Activated B cell treated with CpG ODN at 0.5 μM for 24 hours (primary cell): ENCODE measurements at regions of chr6 and their contacts with region 1.

Region 1: DNA sequence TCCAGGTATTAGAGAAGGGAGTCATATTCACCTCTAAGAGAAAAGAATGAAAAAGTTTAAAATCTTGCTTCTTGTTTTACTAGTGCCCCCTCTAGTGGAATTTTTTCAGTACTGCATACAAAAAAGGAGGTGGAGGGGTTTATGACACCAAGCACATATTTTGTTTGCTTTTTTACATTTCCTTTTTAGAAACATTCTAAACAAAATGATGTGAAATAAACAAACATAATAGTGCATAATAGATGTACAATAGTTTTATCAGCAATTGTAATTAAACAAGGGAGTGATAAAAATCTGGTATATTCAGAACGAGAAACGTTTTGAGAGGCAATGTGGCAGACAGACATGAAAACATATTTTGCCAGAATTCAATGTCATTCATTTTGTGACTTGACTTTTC is 111.0 kb upstream of the TFAP2D start:
- DNase-seq: no peak
- ATAC-seq: no peak
- H3K4me3 Mint-ChIP-seq: no peak overlapping the region
- H3K27ac Mint-ChIP-seq: no peak overlapping the region
- H3K4me1 Mint-ChIP-seq: no peaks in the 10 kb centered on the region
- H3K27me3 Mint-ChIP-seq: no peaks in the 10 kb centered on the region
- CTCF ChIP-seq: no peak

Region 2: GRCh38 chr6:50128420-50129005 is 473.8 kb before region 1 on chr6:
- CTCF ChIA-PET with region 1: no interaction called
- POLR2A ChIA-PET with region 1: no interaction called
- intact Hi-C with region 1: loop called (anchors 1 kb)
- DNase-seq: no peak
- ATAC-seq: no peak
- H3K4me3 Mint-ChIP-seq: no peak overlapping the region
- H3K27ac Mint-ChIP-seq: no peak overlapping the region
- H3K4me1 Mint-ChIP-seq: no peaks in the 10 kb centered on the region
- H3K27me3 Mint-ChIP-seq: no peaks in the 10 kb centered on the region
- CTCF ChIP-seq: no peak